ENCODE measurements at regions of chr4 and their contacts with region 1.

Region 1: DNA sequence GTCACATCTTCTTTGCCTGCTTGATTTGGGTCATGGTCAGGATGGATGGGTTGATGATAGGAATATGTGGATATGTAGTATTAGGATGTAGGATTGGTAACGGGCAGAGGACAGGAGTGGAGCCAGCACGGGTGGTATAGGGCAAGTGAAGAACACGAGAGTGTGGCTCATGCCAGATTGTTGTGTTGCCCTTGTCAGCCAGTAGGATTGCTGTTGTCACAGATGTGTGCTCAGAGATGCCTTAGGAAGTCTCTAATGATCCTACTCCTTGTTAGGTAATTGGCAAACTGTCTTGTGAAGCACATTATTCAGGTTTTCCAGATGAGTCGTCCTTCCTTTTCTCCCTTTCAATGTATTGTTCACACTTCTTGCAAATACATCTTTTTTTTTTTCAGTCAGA is 5.5 kb downstream of the ATP10D start:
- DNase-seq: no peak
- ATAC-seq: peak; percentile 86
- H3K4me3 ChIP-seq: no peak overlapping the region
- H3K27ac ChIP-seq: no peak overlapping the region
- H3K4me1 ChIP-seq: peaks cover 10% of the 10 kb centered on the region
- H3K27me3 ChIP-seq: no peaks in the 10 kb centered on the region
- CTCF ChIP-seq: peak; percentile 75 to 78 (median 75)
- EP300 ChIP-seq: no peak
- POLR2A ChIP-seq: no peak
- RAD21 ChIP-seq: peak; percentile 62

Region 2: DNA sequence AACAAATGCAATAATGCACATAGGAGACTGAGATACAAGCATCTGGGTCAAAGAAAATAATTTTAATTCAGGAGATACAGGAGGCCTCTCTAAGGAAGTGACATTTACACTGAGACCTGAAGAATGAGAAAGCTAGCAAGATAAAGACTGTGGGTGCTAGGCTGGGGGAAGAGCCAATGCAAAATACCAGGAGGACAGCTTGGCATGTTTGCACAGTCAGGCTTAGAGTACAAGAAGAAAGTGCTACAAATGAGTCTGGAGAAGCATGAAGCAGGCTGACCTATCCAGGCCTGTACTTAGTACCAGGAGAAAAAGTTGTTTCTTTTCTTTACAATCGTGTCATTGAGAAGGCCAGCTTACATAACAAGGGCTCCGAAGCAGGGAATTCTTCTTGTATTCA is 402.3 kb before region 1 on chr4:
- CTCF ChIA-PET with region 1: no interaction called
- POLR2A ChIA-PET with region 1: no interaction called
- RAD21 ChIA-PET with region 1: no interaction called
- SMC1A ChIA-PET with region 1: no interaction called
- in situ Hi-C with region 1: no loop called
- intact Hi-C with region 1: no loop called
- DNase-seq: no peak
- ATAC-seq: no peak
- H3K4me3 ChIP-seq: no peak overlapping the region
- H3K27ac ChIP-seq: no peak overlapping the region
- H3K4me1 ChIP-seq: no peaks in the 10 kb centered on the region
- H3K27me3 ChIP-seq: no peaks in the 10 kb centered on the region
- CTCF ChIP-seq: no peak
- EP300 ChIP-seq: no peak
- POLR2A ChIP-seq: no peak
- RAD21 ChIP-seq: no peak

Region 3: DNA sequence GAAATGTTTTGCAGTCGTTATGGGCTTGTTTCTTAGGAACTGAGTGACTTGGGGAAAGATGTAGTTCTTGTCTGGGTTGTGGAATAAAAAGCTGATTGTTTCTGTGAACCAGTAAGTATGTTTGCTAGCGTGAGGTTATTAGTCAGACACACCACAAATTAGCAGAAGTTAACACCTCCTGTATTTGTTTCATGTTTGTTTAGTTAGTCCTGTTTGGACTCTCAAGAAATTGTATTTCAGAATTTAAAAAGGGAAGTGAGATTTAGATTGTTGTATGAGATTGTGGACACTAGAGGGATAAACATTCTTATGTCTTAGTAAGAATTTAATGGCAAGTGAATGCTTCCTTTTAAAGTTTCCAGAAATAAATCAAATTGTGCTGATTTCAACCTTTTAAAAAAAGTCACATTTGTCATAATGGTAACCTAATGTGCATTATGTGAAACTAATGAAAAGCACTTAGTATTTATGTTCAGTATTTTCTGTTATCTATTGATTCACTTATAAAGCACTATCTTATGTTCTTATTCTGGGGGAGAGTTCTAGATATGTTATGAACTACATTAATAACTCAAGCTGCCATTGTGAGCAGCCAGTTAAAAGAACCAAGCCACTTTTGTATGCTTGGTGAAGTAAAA is 20.1 kb after region 1 on chr4:
- CTCF ChIA-PET with region 1: interaction called, 124 read pairs
- POLR2A ChIA-PET with region 1: interaction called, 55 read pairs
- RAD21 ChIA-PET with region 1: interaction called, 88 read pairs
- SMC1A ChIA-PET with region 1: interaction called, 239 read pairs
- in situ Hi-C with region 1: no loop called
- intact Hi-C with region 1: loop called (anchors 2 kb)
- DNase-seq: peak; percentile 90
- ATAC-seq: peak; percentile 94
- H3K4me3 ChIP-seq: peak overlapping the region; percentile 35; the same call in 1 of the 2 replicates
- H3K27ac ChIP-seq: peak overlapping the region; percentile 84
- H3K4me1 ChIP-seq: peaks cover 12% of the 10 kb centered on the region
- H3K27me3 ChIP-seq: no peaks in the 10 kb centered on the region
- CTCF ChIP-seq: peak in 2 of 3 experiments; percentile 2 to 42; a peak in 2 of 6 replicates
- EP300 ChIP-seq: peak; percentile 95 to 96
- POLR2A ChIP-seq: no peak
- RAD21 ChIP-seq: 0 out of 2 replicates have a peak, but pooled peaks have one; percentile 22

Region 4: GRCh38 chr4:47531241-47531953 is 40.8 kb after region 1 on chr4:
- CTCF ChIA-PET with region 1: interaction called, 18 read pairs
- POLR2A ChIA-PET with region 1: interaction called, 4 read pairs
- RAD21 ChIA-PET with region 1: interaction called, 25 read pairs
- SMC1A ChIA-PET with region 1: interaction called, 26 read pairs
- in situ Hi-C with region 1: no loop called
- intact Hi-C with region 1: loop called (anchors 1 kb)
- DNase-seq: peak; percentile 86
- ATAC-seq: peak; percentile 95
- H3K4me3 ChIP-seq: no peak overlapping the region
- H3K27ac ChIP-seq: peak overlapping the region; percentile 43
- H3K4me1 ChIP-seq: peaks cover 13% of the 10 kb centered on the region
- H3K27me3 ChIP-seq: no peaks in the 10 kb centered on the region
- CTCF ChIP-seq: no peak
- EP300 ChIP-seq: peak; percentile 51 to 54; a peak in 2 of 4 replicates
- POLR2A ChIP-seq: no peak
- RAD21 ChIP-seq: no peak

Region 5: GRCh38 chr4:47567511-47567910 is 77.0 kb after region 1 on chr4:
- CTCF ChIA-PET with region 1: interaction called, 26 read pairs
- POLR2A ChIA-PET with region 1: interaction called, 6 read pairs
- RAD21 ChIA-PET with region 1: interaction called, 24 read pairs
- SMC1A ChIA-PET with region 1: interaction called, 27 read pairs
- in situ Hi-C with region 1: no loop called
- intact Hi-C with region 1: loop called (anchors 1 kb)
- DNase-seq: no peak
- ATAC-seq: no peak
- H3K4me3 ChIP-seq: no peak overlapping the region
- H3K27ac ChIP-seq: no peak overlapping the region
- H3K4me1 ChIP-seq: peaks cover 5% of the 10 kb centered on the region; the same call in 1 of the 2 replicates
- H3K27me3 ChIP-seq: no peaks in the 10 kb centered on the region; a peak in 1 of 4 replicates
- CTCF ChIP-seq: no peak
- EP300 ChIP-seq: no peak
- POLR2A ChIP-seq: no peak
- RAD21 ChIP-seq: no peak

Region 6: GRCh38 chr4:47914220-47914925 is 423.8 kb after region 1 on chr4 and contains the start of gene NFXL1:
- CTCF ChIA-PET with region 1: no interaction called
- POLR2A ChIA-PET with region 1: no interaction called
- RAD21 ChIA-PET with region 1: interaction called, 4 read pairs
- SMC1A ChIA-PET with region 1: no interaction called
- in situ Hi-C with region 1: no loop called
- intact Hi-C with region 1: loop called (anchors 10 kb)
- DNase-seq: peak; percentile 79
- ATAC-seq: peak; percentile 97
- H3K4me3 ChIP-seq: peak within 1 kb of the TSS; percentile 78
- H3K27ac ChIP-seq: peak within 1 kb of the TSS; percentile 61
- H3K4me1 ChIP-seq: no peaks in the 10 kb centered on the region; the same call in 1 of the 2 replicates
- H3K27me3 ChIP-seq: no peaks in the 10 kb centered on the region
- CTCF ChIP-seq: no peak
- EP300 ChIP-seq: no peak
- POLR2A ChIP-seq: peak; percentile 91
- RAD21 ChIP-seq: no peak
- polyA plus RNA-seq, gene NFXL1: 8.8 to 10.0 TPM